ENCODE measurements at regions of chr17 and their contacts with region 1.

Region 1: GRCh38 chr17:3913531-3914311 is 2.5 kb downstream of the P2RX1 start:
- DNase-seq: peak; percentile 63
- H3K4me3 ChIP-seq: no peak overlapping the region
- H3K27ac ChIP-seq: no peak overlapping the region
- H3K4me1 ChIP-seq: no peaks in the 10 kb centered on the region
- H3K27me3 ChIP-seq: no peaks in the 10 kb centered on the region
- CTCF ChIP-seq: peak; percentile 82 to 95 (median 89)
- POLR2A ChIP-seq: no peak

Region 2: GRCh38 chr17:3859940-3860339 is 53.8 kb before region 1 on chr17:
- intact Hi-C with region 1: loop called (anchors 5 kb)
- DNase-seq: no peak
- H3K4me3 ChIP-seq: no peak overlapping the region
- H3K27ac ChIP-seq: no peak overlapping the region
- H3K4me1 ChIP-seq: no peaks in the 10 kb centered on the region
- H3K27me3 ChIP-seq: no peaks in the 10 kb centered on the region
- CTCF ChIP-seq: no peak
- POLR2A ChIP-seq: no peak

Region 3: DNA sequence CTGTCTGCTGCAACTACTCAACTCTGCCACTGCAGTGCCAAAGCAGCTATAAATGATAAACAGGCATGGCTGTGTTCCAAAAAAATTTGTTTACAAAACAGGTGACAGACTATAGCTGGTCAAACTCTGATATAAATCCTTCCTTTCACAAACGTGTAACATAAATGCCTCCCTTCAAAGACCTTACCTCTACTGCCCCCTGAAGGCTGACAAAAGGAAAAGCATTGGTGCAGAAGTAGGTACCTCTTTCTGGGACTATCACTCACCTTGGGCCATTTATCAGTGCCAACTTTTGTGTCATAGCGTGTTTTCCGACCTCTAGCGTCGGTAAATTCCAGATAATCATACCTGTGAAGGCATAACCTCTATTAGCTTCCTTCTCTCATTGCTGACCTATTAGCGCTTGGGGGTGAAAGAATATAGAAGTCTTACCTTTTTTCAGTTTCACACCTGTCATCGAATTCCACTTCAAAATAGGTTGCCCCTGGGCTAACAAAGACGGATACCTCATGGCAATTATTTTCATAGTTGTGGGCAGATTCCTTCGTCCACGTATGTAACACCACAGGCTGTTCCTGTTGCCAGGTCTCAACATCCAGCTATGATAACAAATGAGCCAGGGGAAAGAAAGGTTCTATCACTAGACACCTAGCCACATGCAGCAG is 161.2 kb after region 1 on chr17:
- intact Hi-C with region 1: loop called (anchors 5 kb)
- DNase-seq: no peak
- H3K4me3 ChIP-seq: no peak overlapping the region
- H3K27ac ChIP-seq: peak overlapping the region; percentile 10 to 66
- H3K4me1 ChIP-seq: peaks cover 3% of the 10 kb centered on the region
- H3K27me3 ChIP-seq: no peaks in the 10 kb centered on the region
- CTCF ChIP-seq: peak in 3 of 4 experiments; percentile 54 to 67 (median 58)
- POLR2A ChIP-seq: no peak

Region 4: DNA sequence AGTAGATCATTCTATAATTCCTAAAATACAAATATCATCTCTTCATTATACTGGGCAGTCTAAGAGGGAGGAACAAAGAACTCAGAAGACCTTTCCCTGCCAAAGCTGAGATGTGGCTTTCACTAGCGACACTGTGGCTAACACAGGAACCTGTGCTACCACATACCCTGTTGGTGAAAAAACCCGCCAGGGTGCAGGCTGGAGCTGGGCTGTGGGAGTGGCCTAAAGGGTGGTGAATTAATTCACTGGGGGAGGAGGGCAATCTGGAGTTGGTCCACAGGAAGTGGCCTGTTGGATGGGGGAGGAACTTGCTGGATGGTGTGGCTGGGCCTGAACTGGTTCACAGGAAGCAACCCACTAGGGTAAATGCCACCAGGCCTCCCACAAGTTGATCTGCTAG is 1270.6 kb after region 1 on chr17:
- intact Hi-C with region 1: no loop called
- DNase-seq: no peak
- H3K4me3 ChIP-seq: no peak overlapping the region
- H3K27ac ChIP-seq: no peak overlapping the region
- H3K4me1 ChIP-seq: no peaks in the 10 kb centered on the region
- H3K27me3 ChIP-seq: no peaks in the 10 kb centered on the region
- CTCF ChIP-seq: no peak
- POLR2A ChIP-seq: no peak

Measured in prostate gland (tissue), 2 donors.